Activated CD8-positive, alpha-beta T cell treated with anti-CD3 and anti-CD28 coated beads, Interleukin-2, amount 10 ng/mL, durations not matched to agents 7 days and 5 days (primary cell): ENCODE measurements at regions of chr5 and their contacts with region 1.

Region 1: GRCh38 chr5:141878711-141879425 is 658 bp upstream of the PCDH1 start:
- DNase-seq: peak; percentile 92
- ATAC-seq: peak; percentile 88
- H3K4me3 Mint-ChIP-seq: peak overlapping the region; percentile 30
- H3K27ac Mint-ChIP-seq: no peak overlapping the region
- H3K4me1 Mint-ChIP-seq: peaks cover 24% of the 10 kb centered on the region
- H3K27me3 Mint-ChIP-seq: peaks cover 79% of the 10 kb centered on the region

Region 2: GRCh38 chr5:141664732-141665461 is 214.0 kb before region 1 on chr5:
- CTCF ChIA-PET with region 1: interaction called, 37 read pairs
- POLR2A ChIA-PET with region 1: no interaction called
- DNase-seq: peak; percentile 84
- ATAC-seq: peak; percentile 93
- H3K4me3 Mint-ChIP-seq: no peak overlapping the region
- H3K27ac Mint-ChIP-seq: peak overlapping the region; percentile 0
- H3K4me1 Mint-ChIP-seq: peaks cover 8% of the 10 kb centered on the region
- H3K27me3 Mint-ChIP-seq: no peaks in the 10 kb centered on the region

Region 3: DNA sequence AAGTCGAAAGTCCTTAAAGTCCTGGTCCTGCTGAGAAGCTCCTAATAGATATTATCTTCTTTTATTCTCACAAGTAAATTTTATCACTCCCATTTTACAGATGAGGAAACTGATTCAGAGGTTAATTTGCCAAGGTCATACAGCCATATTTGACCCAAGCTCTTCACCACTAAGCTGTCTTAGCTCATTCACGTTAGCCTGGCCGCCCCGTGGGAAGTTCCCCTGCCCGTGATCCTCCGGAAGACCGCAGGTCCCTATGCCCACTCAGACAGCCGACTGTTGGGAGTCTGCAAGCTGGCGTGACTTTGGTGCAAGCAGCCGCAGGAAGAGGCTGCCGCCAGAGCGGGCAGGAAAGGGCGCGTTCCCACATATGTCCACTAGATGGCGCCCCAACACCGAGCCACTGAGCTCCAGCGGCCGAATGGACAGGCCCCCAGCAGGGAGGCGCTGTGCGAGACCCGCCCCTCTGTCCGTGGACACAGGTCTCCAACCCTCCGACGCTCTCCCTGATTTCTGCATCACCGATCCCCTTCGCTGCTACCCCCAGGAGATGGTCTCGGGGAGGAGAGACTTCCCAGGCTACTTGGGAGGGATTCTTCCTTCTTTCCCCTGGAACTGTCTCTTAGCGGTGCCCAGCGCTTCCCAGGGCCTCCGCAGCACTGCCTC is 186.9 kb before region 1 on chr5:
- CTCF ChIA-PET with region 1: interaction called, 148 read pairs
- POLR2A ChIA-PET with region 1: interaction called, 4 read pairs
- DNase-seq: peak; percentile 89
- ATAC-seq: peak; percentile 89
- H3K4me3 Mint-ChIP-seq: peak overlapping the region; percentile 71
- H3K27ac Mint-ChIP-seq: peak overlapping the region; percentile 75
- H3K4me1 Mint-ChIP-seq: peaks cover 28% of the 10 kb centered on the region
- H3K27me3 Mint-ChIP-seq: peaks cover 23% of the 10 kb centered on the region

Region 4: DNA sequence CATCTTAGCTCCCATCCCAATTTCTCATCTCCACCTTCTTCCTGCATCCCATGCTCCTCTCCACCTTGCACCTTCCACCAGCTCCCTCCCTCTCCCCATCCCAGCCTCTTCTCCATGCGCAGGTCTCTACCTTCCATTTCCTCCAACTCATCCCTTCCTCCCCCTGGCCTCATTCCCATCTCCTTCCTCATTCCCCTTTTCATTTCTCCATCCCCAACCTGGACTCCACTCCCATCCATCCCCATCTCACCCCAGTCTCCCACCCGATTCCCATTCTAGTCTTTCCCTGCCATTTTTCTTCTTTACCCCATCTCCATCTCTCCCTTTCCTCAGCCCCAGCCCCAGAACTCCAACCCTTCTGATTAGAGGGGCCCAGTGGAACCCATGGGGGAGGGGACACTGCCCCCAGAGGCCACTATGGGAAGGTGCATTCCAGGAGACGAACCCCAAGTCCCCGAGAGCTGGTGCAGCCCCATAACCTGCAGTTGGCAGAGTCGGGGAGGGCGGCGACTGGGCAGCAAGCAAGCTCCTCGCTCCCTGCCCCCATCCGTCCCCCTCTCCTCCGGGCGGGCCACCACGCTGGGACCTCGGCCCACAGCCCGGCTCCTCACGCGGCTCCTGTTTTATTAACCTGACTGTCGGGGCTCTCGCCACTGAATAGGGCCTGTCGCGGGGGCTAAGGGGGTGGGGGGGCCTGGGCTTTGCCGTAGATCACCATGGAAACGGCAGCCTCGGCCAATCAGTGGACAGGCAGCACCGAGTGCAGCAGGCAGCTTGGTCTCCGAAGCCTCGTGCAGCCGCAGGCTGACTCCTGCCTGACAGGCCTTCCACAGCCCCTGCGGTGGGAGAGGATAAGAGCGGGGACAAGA is 67.3 kb before region 1 on chr5:
- CTCF ChIA-PET with region 1: interaction called, 11 read pairs
- POLR2A ChIA-PET with region 1: no interaction called
- DNase-seq: peak; percentile 49
- ATAC-seq: peak; percentile 80
- H3K4me3 Mint-ChIP-seq: no peak overlapping the region
- H3K27ac Mint-ChIP-seq: no peak overlapping the region
- H3K4me1 Mint-ChIP-seq: peaks cover 10% of the 10 kb centered on the region
- H3K27me3 Mint-ChIP-seq: peaks cover 39% of the 10 kb centered on the region

Region 5: DNA sequence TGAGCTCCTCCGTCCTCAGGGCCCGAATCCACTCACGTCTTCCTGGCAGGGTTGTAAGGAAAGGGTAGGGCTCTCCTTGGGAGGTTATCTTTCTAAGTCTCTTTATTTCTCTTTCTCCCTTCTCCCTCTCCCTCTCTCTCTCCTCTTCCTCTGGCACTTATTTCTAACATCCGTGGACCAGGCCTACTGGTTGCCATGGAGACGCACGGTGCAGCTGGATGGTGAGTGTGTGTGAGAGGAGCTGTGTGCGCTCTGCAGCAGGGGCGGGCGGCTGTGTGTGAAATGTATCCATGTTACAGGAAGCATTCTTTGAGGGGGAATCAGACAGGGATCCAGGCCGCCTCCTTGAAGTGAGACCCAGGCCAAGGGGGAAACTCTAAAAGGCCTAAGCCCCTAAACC is 32.8 kb before region 1 on chr5:
- CTCF ChIA-PET with region 1: interaction called, 13 read pairs
- POLR2A ChIA-PET with region 1: no interaction called
- DNase-seq: no peak
- ATAC-seq: no peak
- H3K4me3 Mint-ChIP-seq: no peak overlapping the region
- H3K27ac Mint-ChIP-seq: no peak overlapping the region
- H3K4me1 Mint-ChIP-seq: peaks cover 20% of the 10 kb centered on the region
- H3K27me3 Mint-ChIP-seq: peaks cover 4% of the 10 kb centered on the region

Region 6: DNA sequence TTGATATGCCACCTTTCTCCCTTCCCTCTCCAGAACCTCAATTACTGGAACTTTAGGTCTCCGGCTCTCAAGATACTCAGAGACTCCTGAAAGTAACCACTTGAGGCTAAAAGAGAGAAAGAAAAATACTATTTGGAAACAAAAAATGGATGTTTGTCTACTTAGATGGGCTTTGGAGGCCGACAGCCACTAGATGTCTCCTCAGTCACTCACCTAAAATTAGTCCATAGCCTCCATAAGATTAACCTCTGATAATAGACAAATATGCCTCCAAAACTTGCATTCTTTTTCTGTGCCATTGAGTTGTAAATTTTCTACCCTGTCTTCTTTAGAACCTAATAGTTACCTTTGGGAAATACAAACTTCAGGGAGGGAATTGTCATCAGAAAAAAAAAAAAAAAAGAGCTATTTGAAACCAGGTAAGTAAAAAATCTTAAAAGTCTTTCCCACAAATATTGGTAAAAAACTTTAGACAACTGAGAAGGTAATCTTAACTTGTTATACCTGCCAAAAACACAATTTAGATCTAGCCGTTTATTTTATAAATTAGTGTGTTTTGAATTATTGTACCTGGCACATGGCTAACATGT is 10.5 kb after region 1 on chr5:
- CTCF ChIA-PET with region 1: interaction called, 35 read pairs
- POLR2A ChIA-PET with region 1: no interaction called
- DNase-seq: no peak
- ATAC-seq: no peak
- H3K4me3 Mint-ChIP-seq: no peak overlapping the region
- H3K27ac Mint-ChIP-seq: no peak overlapping the region
- H3K4me1 Mint-ChIP-seq: no peaks in the 10 kb centered on the region
- H3K27me3 Mint-ChIP-seq: peaks cover 28% of the 10 kb centered on the region

Region 7: GRCh38 chr5:141923448-141924352 is 44.8 kb after region 1 on chr5 and contains the start of gene DELE1:
- CTCF ChIA-PET with region 1: interaction called, 11 read pairs
- POLR2A ChIA-PET with region 1: interaction called, 6 read pairs
- DNase-seq: peak; percentile 94
- ATAC-seq: peak; percentile 98
- H3K4me3 Mint-ChIP-seq: peak within 1 kb of the TSS; percentile 91
- H3K27ac Mint-ChIP-seq: peak within 1 kb of the TSS; percentile 93
- H3K4me1 Mint-ChIP-seq: peaks cover 38% of the 10 kb centered on the region
- H3K27me3 Mint-ChIP-seq: no peaks in the 10 kb centered on the region
- total RNA-seq, gene DELE1: 65.7 to 65.8 TPM

Region 8: GRCh38 chr5:141992349-141992963 is 113.6 kb after region 1 on chr5:
- CTCF ChIA-PET with region 1: no interaction called
- POLR2A ChIA-PET with region 1: no interaction called
- DNase-seq: peak; percentile 87
- ATAC-seq: peak; percentile 91
- H3K4me3 Mint-ChIP-seq: no peak overlapping the region
- H3K27ac Mint-ChIP-seq: no peak overlapping the region
- H3K4me1 Mint-ChIP-seq: peaks cover 3% of the 10 kb centered on the region
- H3K27me3 Mint-ChIP-seq: no peaks in the 10 kb centered on the region